ENCODE measurements at regions of chr20 and their contacts with region 1.

Region 1: GRCh38 chr20:45971675-45972499 is at the start of gene ZNF335:
- DNase-seq: peak; percentile 89 to 93
- ATAC-seq: peak; percentile 72 to 87
- H3K4me3 ChIP-seq: peak within 1 kb of the TSS; percentile 74 to 97 (median 88)
- H3K27ac ChIP-seq: peak within 1 kb of the TSS; percentile 90 to 99 (median 96)
- H3K4me1 ChIP-seq: peaks cover 32 to 36% of the 10 kb centered on the region in 2 donors
- H3K27me3 ChIP-seq: no peaks in the 10 kb centered on the region
- CTCF ChIP-seq: peak; percentile 39 to 72 (median 70)
- POLR2A ChIP-seq: peak; percentile 73 to 93
- total RNA-seq, gene ZNF335: 8.3 to 19.1 (median 12.7) TPM

Region 2: GRCh38 chr20:45362804-45363610 is 608.9 kb before region 1 on chr20 and contains the start of gene SYS1:
- in situ Hi-C with region 1: no loop called
- intact Hi-C with region 1: loop called (anchors 5 kb)
- DNase-seq: peak; percentile 98
- ATAC-seq: peak; percentile 63 to 76
- H3K4me3 ChIP-seq: peak within 1 kb of the TSS; percentile 66 to 86 (median 75)
- H3K27ac ChIP-seq: peak within 1 kb of the TSS; percentile 94 to 99 (median 96)
- H3K4me1 ChIP-seq: peaks cover 26 to 27% of the 10 kb centered on the region in 2 donors
- H3K27me3 ChIP-seq: no peaks in the 10 kb centered on the region
- CTCF ChIP-seq: peak; percentile 89 to 95 (median 95)
- POLR2A ChIP-seq: peak; percentile 90 to 97
- total RNA-seq, gene SYS1: 34.0 to 59.5 (median 43.7) TPM

Region 3: GRCh38 chr20:45812157-45813020 is 159.5 kb before region 1 on chr20 and contains the start of gene UBE2C:
- in situ Hi-C with region 1: loop called in 1 of 4 experiments (anchors 25 kb)
- intact Hi-C with region 1: no loop called
- DNase-seq: peak; percentile 98 to 99
- ATAC-seq: peak; percentile 97 to 100
- H3K4me3 ChIP-seq: peak within 1 kb of the TSS; percentile 53 to 70 (median 58)
- H3K27ac ChIP-seq: peak within 1 kb of the TSS; percentile 60 to 81 (median 72)
- H3K4me1 ChIP-seq: peaks cover 5 to 14% of the 10 kb centered on the region in 2 donors
- H3K27me3 ChIP-seq: no peaks in the 10 kb centered on the region
- CTCF ChIP-seq: no peak
- POLR2A ChIP-seq: peak in 1 of 2 donors; percentile 22
- total RNA-seq, gene UBE2C: 0.84 TPM in 1 of 4 donors, not detected in the others

Region 4: GRCh38 chr20:45880988-45881788 is 90.7 kb before region 1 on chr20 and contains the start of gene ZSWIM1:
- in situ Hi-C with region 1: no loop called
- intact Hi-C with region 1: loop called (anchors 2 kb)
- DNase-seq: peak; percentile 98 to 99
- ATAC-seq: peak; percentile 100
- H3K4me3 ChIP-seq: peak within 1 kb of the TSS; percentile 67 to 70 (median 68)
- H3K27ac ChIP-seq: peak within 1 kb of the TSS; percentile 87 to 95 (median 92)
- H3K4me1 ChIP-seq: peaks cover 9 to 13% of the 10 kb centered on the region in 2 donors
- H3K27me3 ChIP-seq: no peaks in the 10 kb centered on the region
- CTCF ChIP-seq: no peak
- POLR2A ChIP-seq: peak in 1 of 2 donors; percentile 45
- total RNA-seq, gene ZSWIM1: 5.7 to 8.5 (median 6.9) TPM

Region 5: DNA sequence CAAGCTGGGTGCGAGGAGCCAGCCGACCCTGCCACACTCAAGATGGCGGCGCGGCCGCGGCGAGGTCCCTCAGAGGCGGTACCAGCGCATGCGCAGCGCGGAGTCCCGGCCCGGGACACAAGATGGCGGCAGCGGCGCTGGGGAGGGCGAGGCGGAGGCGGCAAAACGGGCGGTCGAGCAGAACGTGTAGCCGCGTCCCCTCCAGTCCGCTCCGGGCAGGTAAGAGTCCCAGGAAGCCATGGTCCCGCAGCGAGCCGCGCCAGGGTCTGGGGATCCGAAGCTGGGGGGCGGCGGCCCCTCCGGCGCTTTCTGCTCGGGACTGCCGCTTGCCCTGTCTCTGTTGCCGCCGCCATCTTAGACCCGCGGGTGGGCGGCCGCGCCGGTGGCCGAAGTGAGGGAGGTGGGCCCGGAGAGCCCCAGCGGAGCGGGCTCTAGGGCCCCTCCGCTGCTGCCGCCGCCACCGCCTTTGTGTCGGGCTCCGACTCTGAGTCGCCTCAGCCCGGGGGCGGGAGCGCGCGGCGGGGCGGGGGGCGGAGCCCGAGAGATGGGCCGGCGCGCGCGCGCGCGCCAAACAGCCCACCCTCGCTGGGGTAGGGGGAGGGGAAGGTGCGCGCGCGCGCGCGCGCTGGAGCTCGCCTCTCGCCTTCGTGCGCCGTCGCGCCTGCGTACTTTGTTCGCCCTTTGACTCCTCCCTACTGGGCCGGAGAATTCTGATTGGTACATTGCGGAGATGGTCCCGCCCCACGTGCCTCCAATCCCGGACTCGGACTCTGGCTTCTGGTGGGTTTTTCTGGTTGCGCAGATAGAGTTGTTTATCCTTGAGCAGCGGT is 37.1 kb before region 1 on chr20 and contains the start of gene PCIF1:
- in situ Hi-C with region 1: no loop called
- intact Hi-C with region 1: loop called (anchors 1 kb)
- DNase-seq: peak; percentile 98
- ATAC-seq: peak; percentile 91
- H3K4me3 ChIP-seq: peak within 1 kb of the TSS; percentile 83 to 99 (median 98)
- H3K27ac ChIP-seq: peak within 1 kb of the TSS; percentile 97 to 100 (median 100)
- H3K4me1 ChIP-seq: peaks cover 21 to 25% of the 10 kb centered on the region in 2 donors
- H3K27me3 ChIP-seq: no peaks in the 10 kb centered on the region
- CTCF ChIP-seq: no peak
- POLR2A ChIP-seq: peak; percentile 95 to 96
- total RNA-seq, gene PCIF1: 32.1 to 51.2 (median 37.0) TPM

Region 6: GRCh38 chr20:46089417-46090388 is 117.8 kb after region 1 on chr20 and contains the start of gene NCOA5:
- in situ Hi-C with region 1: no loop called
- intact Hi-C with region 1: loop called (anchors 1 kb)
- DNase-seq: peak; percentile 92 to 95
- ATAC-seq: peak; percentile 95 to 96
- H3K4me3 ChIP-seq: peak within 1 kb of the TSS; percentile 79 to 94 (median 88)
- H3K27ac ChIP-seq: peak within 1 kb of the TSS; percentile 89 to 98 (median 95)
- H3K4me1 ChIP-seq: peaks cover 45 to 47% of the 10 kb centered on the region in 2 donors
- H3K27me3 ChIP-seq: no peaks in the 10 kb centered on the region
- CTCF ChIP-seq: peak in 3 of 5 experiments; percentile 30 to 39 (median 36)
- POLR2A ChIP-seq: peak; percentile 89 to 92
- total RNA-seq, gene NCOA5: 14.7 to 21.5 (median 19.0) TPM

Measured in gastrocnemius medialis (tissue), 4 donors.